Upper lobe of right lung (tissue), 1 donor: ENCODE measurements at regions of chr18 and their contacts with region 1.

Region 1: GRCh38 chr18:45722899-45723298 is 1.1 kb upstream of the SLC14A1 start:
- DNase-seq: peak; percentile 87
- ATAC-seq: peak; percentile 93
- H3K4me3 ChIP-seq: no peak overlapping the region
- H3K27ac ChIP-seq: no peak overlapping the region
- H3K4me1 ChIP-seq: no peaks in the 10 kb centered on the region
- H3K27me3 ChIP-seq: no peaks in the 10 kb centered on the region
- CTCF ChIP-seq: peak; percentile 66

Region 2: GRCh38 chr18:45562567-45563479 is 160.1 kb before region 1 on chr18:
- intact Hi-C with region 1: no loop called
- DNase-seq: no peak
- ATAC-seq: no peak
- H3K4me3 ChIP-seq: no peak overlapping the region
- H3K27ac ChIP-seq: peak overlapping the region; percentile 65
- H3K4me1 ChIP-seq: no peaks in the 10 kb centered on the region
- H3K27me3 ChIP-seq: no peaks in the 10 kb centered on the region
- CTCF ChIP-seq: no peak

Region 3: GRCh38 chr18:45839414-45840395 is 116.8 kb after region 1 on chr18:
- intact Hi-C with region 1: loop called (anchors 10 kb)
- DNase-seq: no peak
- ATAC-seq: peak; percentile 45
- H3K4me3 ChIP-seq: no peak overlapping the region
- H3K27ac ChIP-seq: no peak overlapping the region
- H3K4me1 ChIP-seq: peaks cover 20% of the 10 kb centered on the region
- H3K27me3 ChIP-seq: peaks cover 30% of the 10 kb centered on the region
- CTCF ChIP-seq: peak; percentile 44

Region 4: DNA sequence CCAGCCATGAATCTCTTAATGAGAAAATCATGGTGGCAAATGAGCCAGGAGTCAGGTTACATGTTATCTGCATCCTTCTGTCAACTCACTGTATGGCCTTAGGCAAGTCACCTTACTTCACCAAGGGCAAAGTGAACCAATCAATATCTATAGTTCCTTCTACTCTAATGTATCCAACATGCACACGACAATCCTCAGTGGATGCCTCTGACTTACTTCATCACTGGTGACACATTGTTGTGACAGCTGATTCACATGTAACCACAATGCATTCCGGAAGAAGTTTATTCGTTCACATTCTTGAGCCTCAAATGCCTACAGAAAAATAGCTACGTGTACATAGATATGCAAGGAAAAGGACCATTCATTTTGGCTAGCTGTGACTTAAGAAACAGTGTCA is 270.5 kb after region 1 on chr18:
- intact Hi-C with region 1: no loop called
- DNase-seq: no peak
- ATAC-seq: no peak
- H3K4me3 ChIP-seq: no peak overlapping the region
- H3K27ac ChIP-seq: no peak overlapping the region
- H3K4me1 ChIP-seq: peaks cover 7% of the 10 kb centered on the region
- H3K27me3 ChIP-seq: no peaks in the 10 kb centered on the region
- CTCF ChIP-seq: no peak